CD8-positive, alpha-beta T cell (primary cell): ENCODE measurements at regions of chr15 and their contacts with region 1.

Region 1: GRCh38 chr15:44536962-44537734 is at the start of gene EIF3J:
- DNase-seq: peak; percentile 88 to 99 (median 95)
- ATAC-seq: peak; percentile 88
- H3K4me3 ChIP-seq: peak within 1 kb of the TSS; percentile 83 to 98
- H3K4me3 Mint-ChIP-seq: peak within 1 kb of the TSS; percentile 95
- H3K27ac ChIP-seq: peak within 1 kb of the TSS; percentile 85 to 92
- H3K27ac Mint-ChIP-seq: peak within 1 kb of the TSS; percentile 96
- H3K4me1 ChIP-seq: peaks cover 42% of the 10 kb centered on the region
- H3K4me1 Mint-ChIP-seq: peaks cover 54% of the 10 kb centered on the region
- H3K27me3 ChIP-seq: no peaks in the 10 kb centered on the region
- H3K27me3 Mint-ChIP-seq: no peaks in the 10 kb centered on the region
- CTCF ChIP-seq: no peak
- total RNA-seq, gene EIF3J: 63.7 to 68.9 TPM

Region 2: GRCh38 chr15:43209059-43209824 is 1327.9 kb before region 1 on chr15:
- CTCF ChIA-PET with region 1: no interaction called
- POLR2A ChIA-PET with region 1: no interaction called
- intact Hi-C with region 1: no loop called
- DNase-seq: no peak
- ATAC-seq: no peak
- H3K4me3 ChIP-seq: no peak overlapping the region
- H3K4me3 Mint-ChIP-seq: no peak overlapping the region
- H3K27ac ChIP-seq: no peak overlapping the region
- H3K27ac Mint-ChIP-seq: no peak overlapping the region
- H3K4me1 ChIP-seq: no peaks in the 10 kb centered on the region
- H3K4me1 Mint-ChIP-seq: peaks cover 2% of the 10 kb centered on the region
- H3K27me3 ChIP-seq: no peaks in the 10 kb centered on the region
- H3K27me3 Mint-ChIP-seq: peaks cover 16% of the 10 kb centered on the region
- CTCF ChIP-seq: no peak

Region 3: DNA sequence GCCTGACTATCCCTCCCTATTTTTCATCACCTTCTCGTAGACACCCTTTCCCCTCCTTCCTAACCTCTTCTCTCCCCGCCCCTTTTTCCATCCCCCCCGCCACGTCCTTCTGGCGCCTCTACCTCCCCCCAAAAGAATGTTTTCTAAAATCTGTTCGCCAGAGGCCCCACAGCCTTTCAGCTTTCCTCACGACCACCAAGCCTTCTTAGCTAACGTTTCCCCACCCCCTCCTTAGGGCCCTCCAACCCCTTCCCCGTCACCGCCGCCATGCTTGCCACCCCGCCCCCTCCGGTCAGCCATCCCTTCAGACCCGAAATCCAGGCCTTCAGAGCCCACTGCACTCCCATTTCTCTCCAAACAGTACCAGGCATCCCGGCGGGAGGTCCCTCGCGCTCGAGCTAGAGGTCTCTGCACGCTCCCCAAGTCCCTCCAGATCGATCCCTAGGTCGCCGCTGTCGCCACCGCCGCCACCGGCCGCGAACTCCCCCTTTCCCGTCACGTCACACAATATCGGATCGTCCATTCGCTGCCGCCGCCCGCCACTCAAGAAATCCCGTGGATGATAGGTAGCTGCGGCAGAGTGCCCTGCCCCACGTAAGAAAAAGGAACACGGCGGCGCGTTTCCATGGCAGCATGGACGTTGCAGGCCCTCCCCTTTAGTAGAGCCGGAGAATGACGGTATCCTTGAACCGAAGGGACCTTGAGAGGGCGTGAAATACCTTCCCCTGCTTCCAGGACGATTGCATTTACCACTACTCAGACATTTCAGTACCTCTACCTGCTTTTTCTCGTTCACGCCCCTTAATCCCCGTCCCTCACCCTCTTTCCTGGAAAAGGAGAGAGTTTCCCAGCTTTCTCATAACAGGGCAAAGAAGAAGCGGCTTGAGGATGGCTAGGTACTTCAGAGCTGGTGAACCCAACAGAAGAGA is 1044.2 kb before region 1 on chr15 and contains the start of gene TP53BP1:
- CTCF ChIA-PET with region 1: no interaction called
- POLR2A ChIA-PET with region 1: no interaction called
- intact Hi-C with region 1: loop called in 1 of 2 experiments (anchors 5 kb)
- DNase-seq: peak; percentile 87 to 97 (median 94)
- ATAC-seq: peak; percentile 98
- H3K4me3 ChIP-seq: peak within 1 kb of the TSS; percentile 87 to 92
- H3K4me3 Mint-ChIP-seq: peak within 1 kb of the TSS; percentile 99
- H3K27ac ChIP-seq: peak within 1 kb of the TSS; percentile 95 to 96
- H3K27ac Mint-ChIP-seq: peak within 1 kb of the TSS; percentile 98
- H3K4me1 ChIP-seq: peaks cover 24% of the 10 kb centered on the region
- H3K4me1 Mint-ChIP-seq: peaks cover 32% of the 10 kb centered on the region
- H3K27me3 ChIP-seq: no peaks in the 10 kb centered on the region
- H3K27me3 Mint-ChIP-seq: no peaks in the 10 kb centered on the region
- CTCF ChIP-seq: no peak
- total RNA-seq, gene TP53BP1: 54.6 to 59.7 TPM

Region 4: GRCh38 chr15:43824302-43825246 is 712.6 kb before region 1 on chr15 and contains the start of gene MFAP1:
- CTCF ChIA-PET with region 1: no interaction called
- POLR2A ChIA-PET with region 1: no interaction called
- intact Hi-C with region 1: loop called (anchors 10 kb)
- DNase-seq: peak; percentile 78 to 99 (median 91)
- ATAC-seq: peak; percentile 94
- H3K4me3 ChIP-seq: peak within 1 kb of the TSS; percentile 88 to 99
- H3K4me3 Mint-ChIP-seq: peak within 1 kb of the TSS; percentile 99
- H3K27ac ChIP-seq: peak within 1 kb of the TSS; percentile 91 to 97
- H3K27ac Mint-ChIP-seq: peak within 1 kb of the TSS; percentile 98
- H3K4me1 ChIP-seq: peaks cover 53% of the 10 kb centered on the region
- H3K4me1 Mint-ChIP-seq: peaks cover 63% of the 10 kb centered on the region
- H3K27me3 ChIP-seq: no peaks in the 10 kb centered on the region
- H3K27me3 Mint-ChIP-seq: no peaks in the 10 kb centered on the region
- CTCF ChIP-seq: no peak
- total RNA-seq, gene MFAP1: 10.1 to 11.9 TPM

Region 5: GRCh38 chr15:44426975-44427755 is 110.0 kb before region 1 on chr15 and contains the start of gene CTDSPL2:
- CTCF ChIA-PET with region 1: no interaction called
- POLR2A ChIA-PET with region 1: interaction called, 3 read pairs
- intact Hi-C with region 1: loop called (anchors 1 to 2 kb)
- DNase-seq: peak; percentile 88 to 97 (median 93)
- ATAC-seq: peak; percentile 95
- H3K4me3 ChIP-seq: peak within 1 kb of the TSS; percentile 61 to 83
- H3K4me3 Mint-ChIP-seq: peak within 1 kb of the TSS; percentile 98
- H3K27ac ChIP-seq: peak within 1 kb of the TSS; percentile 86
- H3K27ac Mint-ChIP-seq: peak within 1 kb of the TSS; percentile 98
- H3K4me1 ChIP-seq: peaks cover 25% of the 10 kb centered on the region
- H3K4me1 Mint-ChIP-seq: peaks cover 46% of the 10 kb centered on the region
- H3K27me3 ChIP-seq: no peaks in the 10 kb centered on the region
- H3K27me3 Mint-ChIP-seq: no peaks in the 10 kb centered on the region
- CTCF ChIP-seq: no peak
- total RNA-seq, gene CTDSPL2: 103 to 104 TPM

Region 6: GRCh38 chr15:44728576-44729407 is 191.6 kb after region 1 on chr15:
- CTCF ChIA-PET with region 1: no interaction called
- POLR2A ChIA-PET with region 1: no interaction called
- intact Hi-C with region 1: loop called in 1 of 2 experiments (anchors 5 kb)
- DNase-seq: peak; percentile 88 to 98 (median 95)
- ATAC-seq: peak; percentile 77
- H3K4me3 ChIP-seq: peak overlapping the region; percentile 84 to 95
- H3K4me3 Mint-ChIP-seq: peak overlapping the region; percentile 99
- H3K27ac ChIP-seq: peak overlapping the region; percentile 93 to 95
- H3K27ac Mint-ChIP-seq: peak overlapping the region; percentile 100
- H3K4me1 ChIP-seq: peaks cover 75% of the 10 kb centered on the region
- H3K4me1 Mint-ChIP-seq: peaks cover 80% of the 10 kb centered on the region
- H3K27me3 ChIP-seq: no peaks in the 10 kb centered on the region
- H3K27me3 Mint-ChIP-seq: no peaks in the 10 kb centered on the region
- CTCF ChIP-seq: no peak

Region 7: GRCh38 chr15:45022871-45023658 is 485.9 kb after region 1 on chr15 and contains the start of gene SORD:
- CTCF ChIA-PET with region 1: no interaction called
- POLR2A ChIA-PET with region 1: no interaction called
- intact Hi-C with region 1: loop called in 1 of 2 experiments (anchors 1 kb)
- DNase-seq: peak; percentile 75 to 92 (median 90)
- ATAC-seq: peak; percentile 99
- H3K4me3 ChIP-seq: peak within 1 kb of the TSS; percentile 74 to 92
- H3K4me3 Mint-ChIP-seq: peak within 1 kb of the TSS; percentile 88
- H3K27ac ChIP-seq: no peak within 1 kb of the TSS
- H3K27ac Mint-ChIP-seq: peak within 1 kb of the TSS; percentile 69
- H3K4me1 ChIP-seq: peaks cover 12% of the 10 kb centered on the region
- H3K4me1 Mint-ChIP-seq: peaks cover 36% of the 10 kb centered on the region
- H3K27me3 ChIP-seq: no peaks in the 10 kb centered on the region
- H3K27me3 Mint-ChIP-seq: peaks cover 13% of the 10 kb centered on the region
- CTCF ChIP-seq: no peak
- total RNA-seq, gene SORD: 1.2 to 1.4 TPM